ENCODE measurements at regions of chr5 and their contacts with region 1.

Region 1: DNA sequence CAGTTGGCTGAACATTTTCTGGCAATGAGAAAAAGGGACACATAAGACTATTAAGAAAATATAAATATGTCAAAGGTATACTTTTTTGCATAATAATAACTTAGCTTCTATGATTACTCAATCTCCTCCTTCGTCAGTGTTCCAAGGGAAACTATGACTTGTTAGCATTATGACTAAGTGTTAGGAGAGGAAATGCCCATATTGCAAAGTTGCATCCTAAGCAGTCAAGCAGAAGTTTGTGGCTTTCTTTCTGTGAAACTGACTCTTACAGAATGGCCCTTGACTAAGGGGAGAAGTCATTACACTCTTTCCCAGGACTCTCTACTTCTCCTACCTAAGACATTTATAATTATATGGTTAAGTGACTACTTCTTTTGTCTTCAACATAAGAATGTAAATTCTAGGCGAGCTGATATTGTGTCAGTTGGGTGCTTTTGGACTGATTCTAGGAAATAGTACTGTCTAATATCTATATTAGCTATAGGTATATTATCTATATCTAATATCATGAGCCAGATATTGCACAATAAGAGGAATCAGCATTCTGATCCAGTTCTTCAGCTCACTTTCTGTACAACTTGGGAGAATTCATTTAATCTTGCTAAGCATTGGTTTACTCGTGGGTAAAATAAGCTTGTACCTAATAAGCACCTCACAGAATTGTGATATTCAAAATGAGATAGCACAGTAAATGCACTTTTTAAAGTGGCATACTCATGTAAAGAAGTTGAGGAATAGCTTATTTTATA is 16.4 kb upstream of the SPINK6 start:
- DNase-seq: peak; percentile 91 to 99 (median 98)
- H3K4me3 ChIP-seq: peak overlapping the region in 1 of 3 experiments; percentile 41
- H3K4me3 Mint-ChIP-seq: peak overlapping the region in 1 of 2 donors; percentile 26
- H3K27ac ChIP-seq: peak overlapping the region in 1 of 2 donors; percentile 87
- H3K27ac Mint-ChIP-seq: peak overlapping the region; percentile 89 to 96 (median 94)
- H3K4me1 ChIP-seq: peaks cover 18 to 23% of the 10 kb centered on the region in 2 donors
- H3K4me1 Mint-ChIP-seq: peaks cover 19% of the 10 kb centered on the region
- H3K27me3 ChIP-seq: no peaks in the 10 kb centered on the region
- H3K27me3 Mint-ChIP-seq: no peaks in the 10 kb centered on the region
- CTCF ChIP-seq: no peak

Region 2: DNA sequence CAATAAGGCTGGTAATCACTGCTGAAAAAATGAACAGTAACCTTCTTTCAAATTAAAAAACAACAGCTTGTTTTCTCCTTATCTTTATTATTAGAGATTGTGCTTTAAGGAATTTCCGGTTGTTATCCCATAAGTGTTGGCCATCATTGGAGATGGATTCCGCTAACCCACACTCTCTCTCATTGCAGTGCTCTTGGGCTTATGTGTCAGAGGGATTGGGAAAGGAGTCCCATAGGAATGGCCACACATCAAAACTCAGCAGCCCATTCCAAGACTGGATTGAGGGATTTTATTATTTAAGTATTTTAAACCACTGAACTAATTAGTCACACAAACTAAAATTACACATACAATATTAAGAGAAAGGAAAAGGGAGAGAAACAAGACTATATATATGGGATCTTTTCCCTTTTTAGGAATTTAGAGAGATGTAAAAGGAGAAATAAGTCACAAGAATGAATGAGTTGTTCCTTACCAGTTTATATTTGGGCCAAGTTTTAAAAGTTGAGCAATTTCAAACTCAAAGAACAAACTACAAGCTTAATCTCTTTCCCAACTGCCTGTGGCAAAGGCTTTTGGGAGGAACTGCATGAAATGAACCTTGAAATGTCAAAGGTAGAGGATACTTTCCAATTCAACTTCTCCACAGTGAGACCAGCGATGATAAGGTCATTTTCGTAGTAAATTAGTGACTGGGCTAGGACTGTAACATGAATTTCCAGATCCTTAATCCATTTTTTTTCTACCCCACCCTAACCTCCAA is 18.8 kb after region 1 on chr5:
- intact Hi-C with region 1: no loop called
- DNase-seq: peak in 2 of 3 donors; percentile 45 to 48
- H3K4me3 ChIP-seq: no peak overlapping the region
- H3K4me3 Mint-ChIP-seq: no peak overlapping the region
- H3K27ac ChIP-seq: peak overlapping the region in 1 of 2 donors; percentile 58
- H3K27ac Mint-ChIP-seq: peak overlapping the region; percentile 31 to 88 (median 66)
- H3K4me1 ChIP-seq: peaks cover 26 to 37% of the 10 kb centered on the region in 2 donors
- H3K4me1 Mint-ChIP-seq: peaks cover 30% of the 10 kb centered on the region
- H3K27me3 ChIP-seq: no peaks in the 10 kb centered on the region
- H3K27me3 Mint-ChIP-seq: peaks cover 0 to 2% (median 0%) of the 10 kb centered on the region in 3 donors
- CTCF ChIP-seq: no peak

Region 3: DNA sequence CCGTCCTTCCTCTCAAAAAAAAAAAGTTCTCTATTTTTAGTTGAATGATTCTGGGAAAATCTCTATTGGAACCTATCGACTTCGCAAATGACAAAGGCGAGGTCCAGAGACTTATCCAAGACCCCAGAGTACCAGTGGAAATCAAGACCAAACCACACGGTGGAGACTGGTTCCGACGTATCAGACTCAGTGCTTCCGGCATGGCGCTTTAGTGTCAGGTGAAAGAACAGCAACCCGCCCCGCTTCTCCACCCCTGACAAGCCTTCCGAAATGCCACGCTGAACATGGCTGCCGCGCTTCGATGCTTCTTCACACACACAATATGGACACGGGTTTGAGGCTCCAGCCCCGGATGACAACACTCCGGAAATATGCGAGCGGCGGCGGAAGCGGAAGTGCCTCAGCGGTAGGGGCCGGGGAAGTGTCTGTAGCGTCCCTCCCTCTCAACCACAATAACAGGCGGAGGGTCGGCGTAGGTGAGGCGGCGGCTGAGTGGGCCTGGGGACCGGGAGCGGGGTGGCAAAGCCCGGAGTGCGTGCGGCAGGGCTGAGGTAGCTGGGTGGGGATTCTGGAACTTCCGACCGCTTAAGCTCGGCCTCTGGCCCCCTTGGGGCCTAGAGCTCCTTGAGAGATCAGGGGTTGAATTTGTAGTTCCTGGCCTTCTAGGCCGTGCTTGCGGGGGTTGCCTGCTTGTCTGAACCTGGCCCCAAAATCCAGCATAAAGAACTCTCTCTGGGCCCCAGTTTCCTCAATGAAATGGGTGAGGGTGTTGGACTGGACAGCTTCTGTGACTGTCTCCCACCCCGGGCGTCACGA is 197.3 kb after region 1 on chr5 and contains the start of gene FBXO38:
- intact Hi-C with region 1: loop called in 1 of 2 experiments (anchors 5 kb)
- DNase-seq: peak; percentile 95 to 98 (median 95)
- H3K4me3 ChIP-seq: peak within 1 kb of the TSS; percentile 82 to 86 (median 85)
- H3K4me3 Mint-ChIP-seq: peak within 1 kb of the TSS; percentile 88 to 97
- H3K27ac ChIP-seq: peak within 1 kb of the TSS; percentile 91 to 97
- H3K27ac Mint-ChIP-seq: peak within 1 kb of the TSS; percentile 95 to 99 (median 98)
- H3K4me1 ChIP-seq: peaks cover 27 to 30% of the 10 kb centered on the region in 2 donors
- H3K4me1 Mint-ChIP-seq: peaks cover 46% of the 10 kb centered on the region
- H3K27me3 ChIP-seq: no peaks in the 10 kb centered on the region
- H3K27me3 Mint-ChIP-seq: peaks cover 0 to 4% (median 2%) of the 10 kb centered on the region in 3 donors
- CTCF ChIP-seq: no peak
- polyA plus RNA-seq, gene FBXO38: 6.8 to 22.1 (median 14.8) TPM

Region 4: GRCh38 chr5:148831590-148832565 is 645.5 kb after region 1 on chr5:
- intact Hi-C with region 1: loop called in 1 of 2 experiments (anchors 10 kb)
- DNase-seq: peak; percentile 59 to 73 (median 70)
- H3K4me3 ChIP-seq: peak overlapping the region; percentile 13 to 85 (median 34)
- H3K4me3 Mint-ChIP-seq: peak overlapping the region; percentile 86 to 96
- H3K27ac ChIP-seq: peak overlapping the region; percentile 65 to 96
- H3K27ac Mint-ChIP-seq: peak overlapping the region; percentile 78 to 95 (median 91)
- H3K4me1 ChIP-seq: peaks cover 73 to 83% of the 10 kb centered on the region in 2 donors
- H3K4me1 Mint-ChIP-seq: peaks cover 90% of the 10 kb centered on the region
- H3K27me3 ChIP-seq: no peaks in the 10 kb centered on the region
- H3K27me3 Mint-ChIP-seq: no peaks in the 10 kb centered on the region
- CTCF ChIP-seq: no peak

Region 5: DNA sequence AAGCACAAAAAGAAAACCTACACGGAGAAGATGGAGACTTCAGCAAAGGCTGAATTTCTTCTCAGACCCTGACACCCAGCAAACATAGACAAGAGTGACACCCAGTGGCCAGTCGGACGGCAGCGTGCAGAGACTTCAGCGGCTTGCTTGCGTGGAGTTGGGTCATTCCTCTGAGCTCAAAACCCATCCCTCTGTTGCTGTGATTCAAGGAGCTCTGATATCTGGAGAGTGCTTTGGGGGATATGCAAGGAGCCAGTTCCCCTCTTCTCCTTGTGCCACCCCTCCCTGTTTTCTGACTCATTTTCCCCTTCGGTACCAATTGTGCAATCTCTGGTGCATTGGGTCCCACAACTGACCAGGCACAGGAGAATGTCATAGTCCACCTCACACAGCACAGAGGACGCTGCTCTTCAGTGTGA is 849.0 kb after region 1 on chr5:
- intact Hi-C with region 1: loop called in 1 of 2 experiments (anchors 10 kb)
- DNase-seq: peak; percentile 53 to 70 (median 64)
- H3K4me3 ChIP-seq: no peak overlapping the region
- H3K4me3 Mint-ChIP-seq: peak overlapping the region in 1 of 2 donors; percentile 61
- H3K27ac ChIP-seq: no peak overlapping the region
- H3K27ac Mint-ChIP-seq: peak overlapping the region in 3 of 7 donors; percentile 5 to 52 (median 31)
- H3K4me1 ChIP-seq: peaks cover 46 to 52% of the 10 kb centered on the region in 2 donors
- H3K4me1 Mint-ChIP-seq: peaks cover 53% of the 10 kb centered on the region
- H3K27me3 ChIP-seq: no peaks in the 10 kb centered on the region
- H3K27me3 Mint-ChIP-seq: peaks cover 0 to 2% (median 2%) of the 10 kb centered on the region in 3 donors
- CTCF ChIP-seq: peak; percentile 86